A549 (cell line): ENCODE measurements at regions of chr1 and their contacts with region 1.

Region 1: DNA sequence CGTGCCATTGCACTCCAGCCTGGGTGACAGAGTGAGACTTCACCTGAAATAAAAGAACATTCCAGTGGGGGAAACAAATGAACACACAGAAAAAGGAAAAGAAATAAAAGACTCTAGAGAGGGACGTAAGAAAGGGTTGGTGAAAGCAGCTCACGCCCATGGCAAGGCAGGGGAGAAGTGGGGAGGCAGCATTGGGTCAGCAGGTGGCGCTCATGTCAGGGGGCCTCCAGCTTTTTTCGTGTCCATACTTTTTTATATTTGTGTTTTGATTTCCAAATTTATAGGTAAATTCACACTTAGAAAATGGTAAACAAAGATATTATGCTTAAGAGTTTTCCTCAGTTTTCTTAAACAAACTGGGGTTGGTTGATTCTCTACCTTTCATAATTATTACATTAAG is 45.5 kb downstream of the VPS13D start:
- DNase-seq: peak; percentile 27 to 35
- ATAC-seq: peak; percentile 70 to 80; a peak in 4 of 6 replicates
- H3K4me3 ChIP-seq: no peak overlapping the region
- H3K27ac ChIP-seq: no peak overlapping the region
- H3K4me1 ChIP-seq: peaks cover 5% of the 10 kb centered on the region; the same call in 1 of the 3 replicates
- CTCF ChIP-seq: peak; percentile 58
- EP300 ChIP-seq: no peak
- POLR2A ChIP-seq: no peak
- RAD21 ChIP-seq: peak; percentile 42 to 55; a peak in 4 of 5 replicates

Region 2: DNA sequence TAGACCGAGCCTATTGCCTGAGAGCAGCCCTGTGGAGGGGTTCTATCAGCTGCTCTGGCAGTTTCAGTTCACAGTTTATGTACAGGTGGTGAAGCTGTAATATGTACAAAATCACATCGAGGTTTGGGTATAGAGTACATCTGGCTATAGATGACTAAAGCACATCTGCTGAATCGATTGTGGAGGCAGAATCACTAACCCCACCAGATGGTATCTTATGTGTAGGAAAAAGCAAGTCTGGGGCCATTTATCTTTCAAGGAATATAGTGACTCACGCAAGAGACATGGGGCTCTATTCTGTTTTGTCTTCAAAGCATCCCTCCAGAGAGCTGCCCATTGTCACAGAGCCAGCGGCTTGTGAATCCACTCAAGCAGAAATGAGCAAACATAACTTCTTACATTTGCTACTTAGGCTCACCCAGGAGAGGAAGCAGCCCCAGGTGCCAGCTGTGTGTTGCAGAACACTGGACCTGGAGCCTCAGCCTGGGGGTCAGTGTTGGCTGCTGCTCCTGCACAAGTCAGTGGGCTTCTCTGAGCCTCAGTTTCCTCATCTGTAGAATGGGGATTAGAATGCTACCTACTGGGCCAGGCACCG is 234.8 kb before region 1 on chr1:
- CTCF ChIA-PET with region 1: no interaction called
- POLR2A ChIA-PET with region 1: no interaction called
- DNase-seq: peak in 1 of 2 experiments; percentile 32
- ATAC-seq: peak in 1 of 2 experiments; percentile 24; a peak in 1 of 6 replicates
- H3K4me3 ChIP-seq: no peak overlapping the region
- H3K27ac ChIP-seq: no peak overlapping the region
- H3K4me1 ChIP-seq: peaks cover 5% of the 10 kb centered on the region; the same call in 1 of the 3 replicates
- CTCF ChIP-seq: no peak
- EP300 ChIP-seq: no peak
- POLR2A ChIP-seq: no peak
- RAD21 ChIP-seq: no peak

Region 3: GRCh38 chr1:12287869-12288268 is 12.5 kb after region 1 on chr1:
- CTCF ChIA-PET with region 1: interaction called, 11 read pairs
- POLR2A ChIA-PET with region 1: no interaction called
- DNase-seq: no peak
- ATAC-seq: no peak
- H3K4me3 ChIP-seq: no peak overlapping the region
- H3K27ac ChIP-seq: no peak overlapping the region
- H3K4me1 ChIP-seq: no peaks in the 10 kb centered on the region
- CTCF ChIP-seq: no peak
- EP300 ChIP-seq: no peak
- POLR2A ChIP-seq: no peak
- RAD21 ChIP-seq: no peak